ENCODE measurements at regions of chr19 and their contacts with region 1.

Region 1: DNA sequence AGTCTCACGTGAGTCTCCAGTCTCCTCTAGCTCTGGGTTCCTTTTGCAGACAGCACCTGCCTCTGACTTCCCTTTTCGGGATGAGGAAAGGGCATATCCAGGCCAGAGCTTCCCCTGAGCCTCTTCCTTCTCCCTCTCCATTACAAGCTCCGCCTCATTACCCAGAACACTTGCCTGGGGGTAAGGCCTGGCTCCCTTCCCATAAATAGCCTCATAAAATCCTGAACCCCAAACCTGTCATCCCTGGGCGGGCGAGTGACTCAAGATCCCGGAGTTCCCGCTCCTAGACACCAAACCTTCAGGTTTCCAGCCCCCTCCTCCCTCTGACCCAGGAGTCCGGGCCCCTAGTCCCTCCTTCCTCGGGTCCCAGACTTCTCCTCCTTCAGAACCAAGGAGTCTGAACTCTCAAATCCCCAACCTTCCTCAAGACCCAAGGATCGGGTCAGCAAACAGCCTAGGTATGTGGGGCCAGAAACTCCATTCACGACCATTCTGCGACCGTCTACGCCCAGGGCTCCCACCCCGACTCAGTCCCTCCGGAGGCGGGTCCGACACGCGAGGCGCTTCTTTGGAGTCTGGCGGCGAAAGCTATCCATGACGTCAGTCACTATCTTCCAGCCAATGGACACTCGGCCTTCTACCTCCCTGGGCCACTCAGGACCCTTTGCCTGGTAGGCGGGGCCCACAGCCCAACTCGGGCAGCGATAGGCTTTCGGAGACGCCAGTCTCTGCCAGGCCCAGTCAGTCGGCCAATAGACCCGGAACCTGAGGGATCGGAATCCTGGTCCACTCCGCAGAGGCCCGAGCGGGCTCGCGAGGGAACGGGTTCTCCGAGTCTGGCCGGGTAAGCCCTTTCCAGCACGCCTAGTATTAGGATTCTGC is 6.5 kb upstream of the CNFN start:
- DNase-seq: peak; percentile 99 to 100 (median 100)
- ATAC-seq: peak; percentile 99
- H3K4me3 ChIP-seq: peak overlapping the region; percentile 49
- H3K27ac ChIP-seq: peak overlapping the region; percentile 81
- H3K4me1 ChIP-seq: peaks cover 14 to 20% of the 10 kb centered on the region in 2 experiments
- H3K27me3 ChIP-seq: peaks cover 5 to 6% of the 10 kb centered on the region in 2 experiments; a peak in 3 of 5 replicates
- CTCF ChIP-seq: no peak
- EP300 ChIP-seq: no peak
- POLR2A ChIP-seq: peak; percentile 92
- RAD21 ChIP-seq: no peak

Region 2: DNA sequence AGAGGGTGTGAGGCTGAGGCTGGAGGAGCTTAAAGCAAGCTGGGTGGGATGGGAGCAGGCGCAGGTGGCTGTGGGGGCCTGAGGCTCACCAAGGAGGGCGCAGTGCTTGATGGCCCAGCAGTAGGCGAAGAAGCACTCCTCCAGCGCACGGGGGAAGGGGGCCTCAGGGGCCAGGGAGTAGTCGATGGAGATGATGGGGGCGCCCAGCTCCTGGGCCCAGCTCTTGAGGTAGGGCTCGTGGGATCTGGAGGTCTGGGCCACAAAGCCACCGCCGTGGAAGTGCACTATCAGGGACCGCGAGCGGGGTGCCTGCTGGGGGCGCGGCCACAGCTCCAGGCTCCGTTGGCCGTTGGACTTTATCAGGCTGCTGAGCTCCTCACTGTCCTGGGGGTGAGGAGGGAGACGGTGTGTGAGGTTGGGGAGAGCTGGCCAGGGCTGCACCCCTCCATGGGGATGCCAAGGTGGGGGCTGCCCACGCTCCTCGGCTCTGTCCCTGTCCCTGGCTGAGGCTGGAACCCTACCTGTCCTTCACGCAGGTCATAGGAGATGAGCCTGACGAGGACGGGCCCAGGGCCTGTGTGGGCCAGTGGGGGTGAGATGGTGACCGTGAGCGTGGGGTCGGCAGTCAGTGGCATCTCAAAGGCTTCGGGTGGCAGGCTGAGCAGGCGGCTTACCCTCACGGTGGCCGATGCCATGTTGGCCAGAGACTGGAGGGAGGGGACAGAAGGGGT is 10.6 kb after region 1 on chr19:
- CTCF ChIA-PET with region 1: no interaction called
- POLR2A ChIA-PET with region 1: interaction called, 13 read pairs
- in situ Hi-C with region 1: no loop called
- intact Hi-C with region 1: no loop called
- DNase-seq: no peak
- ATAC-seq: no peak; the same call in 2 of the 3 replicates
- H3K4me3 ChIP-seq: no peak overlapping the region
- H3K27ac ChIP-seq: no peak overlapping the region
- H3K4me1 ChIP-seq: peaks cover 0 to 43% of the 10 kb centered on the region in 2 experiments; a peak in 2 of 5 replicates
- H3K27me3 ChIP-seq: peaks cover 0 to 8% of the 10 kb centered on the region in 2 experiments; a peak in 3 of 5 replicates
- CTCF ChIP-seq: no peak
- EP300 ChIP-seq: no peak
- POLR2A ChIP-seq: no peak
- RAD21 ChIP-seq: no peak

Measured in K562 (cell line).